Left colon (tissue), 2 donors: ENCODE measurements at regions of chrX and their contacts with region 1.

Region 1: GRCh38 chrX:37755025-37755424 is 24.8 kb upstream of the CYBB start:
- DNase-seq: peak in 1 of 2 donors; percentile 25
- ATAC-seq: peak; percentile 35

Region 2: DNA sequence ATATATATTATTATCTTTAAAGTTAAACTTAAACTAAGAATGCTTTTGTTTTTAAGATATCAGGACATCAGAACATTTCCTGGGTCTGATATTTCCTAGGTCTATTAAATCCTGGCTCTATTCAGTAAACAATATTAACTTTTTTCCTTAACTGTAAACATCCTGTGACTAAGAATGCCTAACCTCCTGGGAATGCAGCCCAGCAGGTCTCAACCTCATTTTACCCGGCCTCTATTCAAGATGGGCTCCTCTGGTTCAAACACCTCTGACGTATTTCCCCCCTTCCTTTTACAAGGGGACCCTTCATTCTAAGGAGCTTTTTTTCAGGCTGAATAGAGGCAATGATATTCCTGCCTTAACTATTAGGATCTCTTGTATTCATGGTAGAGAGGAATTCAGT is 128.2 kb after region 1 on chrX:
- intact Hi-C with region 1: no loop called
- DNase-seq: no peak
- ATAC-seq: no peak

Region 3: GRCh38 chrX:37926700-37927099 is 171.7 kb after region 1 on chrX:
- intact Hi-C with region 1: no loop called
- DNase-seq: no peak
- ATAC-seq: peak; percentile 81

Region 4: GRCh38 chrX:38045538-38046096 is 290.6 kb after region 1 on chrX:
- intact Hi-C with region 1: no loop called
- DNase-seq: no peak
- ATAC-seq: no peak

Region 5: DNA sequence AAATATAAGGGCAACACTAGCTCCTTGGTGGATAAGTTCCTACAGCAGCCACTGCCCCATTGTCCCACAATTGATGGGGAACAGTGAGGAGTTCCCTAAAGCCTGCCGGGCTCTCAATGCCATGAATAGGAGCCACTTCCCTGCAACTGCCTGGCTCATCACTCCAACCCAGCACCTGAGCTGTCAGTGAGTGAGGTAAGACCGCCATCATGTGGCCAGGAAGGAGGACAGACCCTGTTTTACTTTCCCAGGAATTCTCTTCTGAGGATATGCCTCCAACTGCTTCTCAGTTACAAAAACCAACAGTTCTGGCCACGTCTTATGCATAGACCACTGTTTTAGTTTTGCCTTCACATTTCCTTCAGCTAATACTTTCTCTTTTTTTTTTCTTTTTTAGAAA is 420.1 kb after region 1 on chrX:
- intact Hi-C with region 1: loop called in 1 of 2 experiments (anchors 10 kb)
- DNase-seq: peak in 1 of 2 donors; percentile 23
- ATAC-seq: peak; percentile 90